Activated naive CD4-positive, alpha-beta T cell treated with anti-CD3 and anti-CD28 coated beads for 36 hours (primary cell): ENCODE measurements at regions of chr16 and their contacts with region 1.

Region 1: DNA sequence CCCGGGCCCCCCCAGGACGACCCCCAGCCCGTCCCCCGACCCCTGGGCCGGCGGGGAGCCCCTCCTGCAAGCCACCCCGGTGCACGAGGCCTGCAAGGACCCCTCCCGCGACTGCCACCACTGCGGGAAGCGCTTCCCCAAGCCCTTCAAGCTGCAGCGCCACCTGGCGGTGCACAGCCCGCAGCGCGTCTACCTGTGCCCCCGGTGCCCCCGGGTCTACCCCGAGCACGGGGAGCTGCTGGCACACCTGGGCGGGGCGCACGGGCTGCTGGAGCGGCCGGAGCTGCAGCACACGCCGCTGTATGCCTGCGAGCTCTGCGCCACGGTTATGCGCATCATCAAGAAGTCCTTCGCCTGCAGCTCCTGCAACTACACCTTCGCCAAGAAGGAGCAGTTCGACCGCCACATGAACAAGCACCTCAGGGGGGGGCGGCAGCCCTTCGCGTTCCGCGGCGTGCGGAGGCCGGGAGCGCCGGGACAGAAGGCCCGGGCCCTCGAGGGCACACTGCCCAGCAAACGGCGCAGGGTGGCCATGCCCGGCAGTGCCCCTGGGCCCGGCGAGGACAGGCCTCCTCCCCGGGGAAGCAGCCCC is 15.6 kb upstream of the ZFPM1 start:
- DNase-seq: peak; percentile 64
- H3K4me3 Mint-ChIP-seq: no peak overlapping the region
- H3K27ac Mint-ChIP-seq: no peak overlapping the region
- H3K4me1 Mint-ChIP-seq: no peaks in the 10 kb centered on the region
- H3K27me3 Mint-ChIP-seq: no peaks in the 10 kb centered on the region

Region 2: GRCh38 chr16:87956365-87957231 is 480.9 kb before region 1 on chr16:
- CTCF ChIA-PET with region 1: interaction called, 4 read pairs
- intact Hi-C with region 1: loop called (anchors 5 kb)
- DNase-seq: peak; percentile 91
- H3K4me3 Mint-ChIP-seq: peak overlapping the region; percentile 80
- H3K27ac Mint-ChIP-seq: peak overlapping the region; percentile 99
- H3K4me1 Mint-ChIP-seq: peaks cover 90% of the 10 kb centered on the region
- H3K27me3 Mint-ChIP-seq: no peaks in the 10 kb centered on the region

Region 3: DNA sequence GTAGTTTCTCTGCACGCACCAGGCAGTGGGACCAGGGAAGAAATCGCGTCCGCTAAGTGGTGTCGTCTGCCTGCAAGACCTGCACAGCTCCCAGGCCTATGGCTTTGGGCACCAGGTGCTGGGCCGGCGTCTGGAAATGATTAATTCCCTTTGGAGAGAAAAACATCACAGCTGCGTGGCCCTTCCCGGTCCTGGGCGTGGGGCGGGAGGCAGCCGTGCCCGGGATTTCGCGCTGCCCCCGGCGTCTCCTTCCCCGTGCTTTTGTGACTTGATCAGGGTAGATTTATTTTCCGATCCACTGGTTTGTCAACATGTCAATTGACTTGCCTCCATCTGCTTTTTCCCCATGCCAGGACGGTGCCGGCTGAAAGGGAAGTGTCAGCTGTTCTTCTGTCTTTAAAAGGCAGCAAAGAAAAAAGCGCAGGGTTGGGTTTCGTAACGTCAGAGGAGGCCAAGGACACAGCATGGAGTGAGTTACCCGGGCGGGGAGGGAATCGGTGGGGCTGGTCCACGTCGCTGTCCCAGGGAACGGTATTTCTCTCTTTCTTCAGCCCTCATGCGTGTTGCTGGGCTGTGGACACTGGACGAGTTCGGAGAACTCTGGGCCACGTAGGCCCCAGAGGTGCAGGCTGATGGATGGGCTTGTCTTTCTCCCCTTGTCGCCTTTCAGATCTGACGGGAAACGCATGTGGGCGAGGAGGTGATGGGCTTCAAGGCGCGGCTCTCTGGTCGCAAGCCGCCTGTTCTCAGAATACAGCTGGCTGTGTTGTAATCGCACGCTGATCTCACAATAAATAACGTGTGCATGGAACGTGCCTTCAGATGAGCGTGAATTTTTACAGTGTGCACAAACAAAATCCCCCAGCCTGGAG is 242.8 kb before region 1 on chr16:
- CTCF ChIA-PET with region 1: interaction called, 3 read pairs
- intact Hi-C with region 1: loop called (anchors 2 kb)
- DNase-seq: no peak
- H3K4me3 Mint-ChIP-seq: no peak overlapping the region
- H3K27ac Mint-ChIP-seq: no peak overlapping the region
- H3K4me1 Mint-ChIP-seq: no peaks in the 10 kb centered on the region
- H3K27me3 Mint-ChIP-seq: no peaks in the 10 kb centered on the region

Region 4: GRCh38 chr16:88282225-88283018 is 155.0 kb before region 1 on chr16:
- CTCF ChIA-PET with region 1: no interaction called
- intact Hi-C with region 1: no loop called
- DNase-seq: no peak
- H3K4me3 Mint-ChIP-seq: no peak overlapping the region
- H3K27ac Mint-ChIP-seq: no peak overlapping the region
- H3K4me1 Mint-ChIP-seq: no peaks in the 10 kb centered on the region
- H3K27me3 Mint-ChIP-seq: peaks cover 2% of the 10 kb centered on the region